PC-3 (cell line): ENCODE measurements at regions of chr1 and their contacts with region 1.

Region 1: GRCh38 chr1:16981269-16981849 is 939 bp upstream of the MFAP2 start:
- DNase-seq: peak; percentile 93
- ATAC-seq: peak; percentile 73
- H3K4me3 ChIP-seq: no peak overlapping the region
- H3K27ac ChIP-seq: peak overlapping the region; percentile 93
- H3K4me1 ChIP-seq: peaks cover 45% of the 10 kb centered on the region
- H3K27me3 ChIP-seq: no peaks in the 10 kb centered on the region
- CTCF ChIP-seq: no peak

Region 2: GRCh38 chr1:17393230-17393629 is 411.9 kb after region 1 on chr1:
- CTCF ChIA-PET with region 1: no interaction called
- POLR2A ChIA-PET with region 1: interaction called, 11 read pairs
- intact Hi-C with region 1: no loop called
- DNase-seq: no peak
- ATAC-seq: no peak
- H3K4me3 ChIP-seq: no peak overlapping the region
- H3K27ac ChIP-seq: no peak overlapping the region
- H3K4me1 ChIP-seq: no peaks in the 10 kb centered on the region
- H3K27me3 ChIP-seq: no peaks in the 10 kb centered on the region; the same call in 1 of the 2 replicates
- CTCF ChIP-seq: no peak